ENCODE measurements at regions of chr21 and their contacts with region 1.

Region 1: DNA sequence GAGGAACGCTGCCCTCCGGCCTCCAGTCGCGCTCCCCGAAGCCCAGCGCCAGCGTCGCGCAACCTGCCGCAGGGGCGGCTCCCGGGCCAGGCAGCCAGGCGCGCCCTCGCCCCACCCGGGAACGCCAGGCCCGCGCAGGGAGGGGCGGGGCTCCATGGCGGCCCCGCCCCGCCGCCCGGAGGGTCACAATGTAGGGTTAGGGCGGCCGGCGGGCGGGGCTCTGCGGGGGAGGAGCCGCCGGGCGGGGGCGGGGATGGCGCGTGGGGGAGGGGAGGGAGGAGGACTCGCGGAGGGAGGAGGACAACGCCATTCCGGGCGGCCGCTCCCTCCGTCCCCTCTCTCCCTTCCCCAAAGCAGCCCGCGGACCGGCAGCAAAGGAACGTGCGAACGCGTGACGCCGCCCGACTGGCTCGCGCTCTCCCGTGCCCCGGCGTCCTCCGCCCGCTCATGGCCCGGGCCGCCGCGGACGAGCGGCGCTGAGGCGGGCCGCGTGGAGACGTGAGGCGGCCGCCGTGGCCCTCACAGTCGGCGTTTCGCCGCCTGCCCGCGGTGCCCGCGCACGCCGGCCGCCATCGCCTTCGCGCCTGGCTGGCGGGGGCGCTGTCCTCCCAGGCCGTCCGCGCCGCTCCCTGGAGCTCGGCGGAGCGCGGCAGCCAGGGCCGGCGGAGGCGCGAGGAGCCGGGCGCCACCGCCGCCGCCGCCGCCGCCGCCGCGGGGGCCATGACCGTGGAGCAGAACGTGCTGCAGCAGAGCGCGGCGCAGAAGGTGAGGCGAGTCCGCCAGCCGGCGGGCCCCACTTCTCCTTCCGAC is at the start of gene USP25:
- DNase-seq: peak; percentile 88 to 92
- H3K4me3 ChIP-seq: peak within 1 kb of the TSS; percentile 93
- H3K4me3 Mint-ChIP-seq: peak within 1 kb of the TSS; percentile 94
- H3K27ac Mint-ChIP-seq: peak within 1 kb of the TSS; percentile 93
- H3K4me1 ChIP-seq: peaks cover 10% of the 10 kb centered on the region
- H3K4me1 Mint-ChIP-seq: no peaks in the 10 kb centered on the region
- H3K27me3 ChIP-seq: no peaks in the 10 kb centered on the region
- H3K27me3 Mint-ChIP-seq: no peaks in the 10 kb centered on the region
- CTCF ChIP-seq: no peak
- total RNA-seq, gene USP25: 44.3 and 46.7 TPM in 2 replicates

Region 2: GRCh38 chr21:15229390-15229789 is 500.5 kb before region 1 on chr21:
- CTCF ChIA-PET with region 1: no interaction called
- POLR2A ChIA-PET with region 1: no interaction called
- intact Hi-C with region 1: no loop called
- DNase-seq: no peak
- H3K4me3 ChIP-seq: no peak overlapping the region
- H3K4me3 Mint-ChIP-seq: no peak overlapping the region
- H3K27ac Mint-ChIP-seq: no peak overlapping the region
- H3K4me1 ChIP-seq: no peaks in the 10 kb centered on the region
- H3K4me1 Mint-ChIP-seq: no peaks in the 10 kb centered on the region
- H3K27me3 ChIP-seq: no peaks in the 10 kb centered on the region
- H3K27me3 Mint-ChIP-seq: no peaks in the 10 kb centered on the region
- CTCF ChIP-seq: no peak

Region 3: GRCh38 chr21:15638856-15639549 is 90.9 kb before region 1 on chr21:
- CTCF ChIA-PET with region 1: no interaction called
- POLR2A ChIA-PET with region 1: no interaction called
- intact Hi-C with region 1: loop called (anchors 1 kb)
- DNase-seq: peak; percentile 83 to 91
- H3K4me3 ChIP-seq: no peak overlapping the region
- H3K4me3 Mint-ChIP-seq: peak overlapping the region; percentile 56
- H3K27ac Mint-ChIP-seq: peak overlapping the region; percentile 89
- H3K4me1 ChIP-seq: peaks cover 58% of the 10 kb centered on the region
- H3K4me1 Mint-ChIP-seq: peaks cover 38% of the 10 kb centered on the region
- H3K27me3 ChIP-seq: no peaks in the 10 kb centered on the region
- H3K27me3 Mint-ChIP-seq: no peaks in the 10 kb centered on the region
- CTCF ChIP-seq: no peak

Region 4: GRCh38 chr21:15659753-15660422 is 70.0 kb before region 1 on chr21:
- CTCF ChIA-PET with region 1: no interaction called
- POLR2A ChIA-PET with region 1: no interaction called
- intact Hi-C with region 1: loop called (anchors 1 kb)
- DNase-seq: peak; percentile 72 to 78
- H3K4me3 ChIP-seq: peak overlapping the region; percentile 5; the same call in 1 of the 2 replicates
- H3K4me3 Mint-ChIP-seq: peak overlapping the region; percentile 67
- H3K27ac Mint-ChIP-seq: peak overlapping the region; percentile 95
- H3K4me1 ChIP-seq: peaks cover 34% of the 10 kb centered on the region
- H3K4me1 Mint-ChIP-seq: peaks cover 32% of the 10 kb centered on the region
- H3K27me3 ChIP-seq: no peaks in the 10 kb centered on the region
- H3K27me3 Mint-ChIP-seq: no peaks in the 10 kb centered on the region
- CTCF ChIP-seq: no peak

Region 5: GRCh38 chr21:15761507-15762100 is 31.7 kb after region 1 on chr21:
- CTCF ChIA-PET with region 1: no interaction called
- POLR2A ChIA-PET with region 1: no interaction called
- intact Hi-C with region 1: no loop called
- DNase-seq: no peak
- H3K4me3 ChIP-seq: no peak overlapping the region
- H3K4me3 Mint-ChIP-seq: no peak overlapping the region
- H3K27ac Mint-ChIP-seq: no peak overlapping the region
- H3K4me1 ChIP-seq: peaks cover 28% of the 10 kb centered on the region
- H3K4me1 Mint-ChIP-seq: peaks cover 19% of the 10 kb centered on the region
- H3K27me3 ChIP-seq: no peaks in the 10 kb centered on the region
- H3K27me3 Mint-ChIP-seq: no peaks in the 10 kb centered on the region
- CTCF ChIP-seq: no peak

Region 6: DNA sequence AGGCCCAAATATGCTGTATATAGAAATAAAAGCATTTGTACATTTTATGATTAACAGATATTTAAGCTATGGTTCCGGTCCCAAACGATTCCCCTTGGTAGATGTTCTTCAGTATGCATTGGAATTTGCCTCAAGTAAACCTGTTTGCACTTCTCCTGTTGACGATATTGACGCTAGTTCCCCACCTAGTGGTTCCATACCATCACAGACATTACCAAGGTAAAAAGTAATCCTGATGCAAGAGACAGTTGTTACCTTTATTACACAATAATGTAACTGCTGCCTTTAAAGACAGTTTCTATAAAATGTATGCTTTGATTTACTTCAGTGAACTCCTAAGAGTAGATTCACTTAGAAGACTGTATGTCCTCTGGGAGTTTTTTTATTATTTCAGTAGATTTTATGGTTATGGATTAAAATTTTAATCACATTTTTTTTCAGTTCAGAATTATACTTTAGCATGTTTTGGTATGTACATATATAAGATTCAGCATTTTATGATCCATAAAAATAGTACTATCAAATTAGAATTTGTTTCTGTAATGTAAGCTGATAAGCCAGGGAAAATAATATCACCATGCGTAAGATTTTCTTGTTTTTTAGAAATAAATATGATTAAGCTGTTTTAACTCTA is 96.4 kb after region 1 on chr21:
- CTCF ChIA-PET with region 1: no interaction called
- POLR2A ChIA-PET with region 1: no interaction called
- intact Hi-C with region 1: loop called (anchors 5 kb)
- DNase-seq: peak; percentile 43 to 71
- H3K4me3 ChIP-seq: no peak overlapping the region
- H3K4me3 Mint-ChIP-seq: no peak overlapping the region
- H3K27ac Mint-ChIP-seq: no peak overlapping the region
- H3K4me1 ChIP-seq: no peaks in the 10 kb centered on the region
- H3K4me1 Mint-ChIP-seq: no peaks in the 10 kb centered on the region
- H3K27me3 ChIP-seq: no peaks in the 10 kb centered on the region
- H3K27me3 Mint-ChIP-seq: no peaks in the 10 kb centered on the region
- CTCF ChIP-seq: peak; percentile 63 to 76